Right cardiac atrium (tissue), 5 donors: ENCODE measurements at regions of chr1 and their contacts with region 1.

Region 1: DNA sequence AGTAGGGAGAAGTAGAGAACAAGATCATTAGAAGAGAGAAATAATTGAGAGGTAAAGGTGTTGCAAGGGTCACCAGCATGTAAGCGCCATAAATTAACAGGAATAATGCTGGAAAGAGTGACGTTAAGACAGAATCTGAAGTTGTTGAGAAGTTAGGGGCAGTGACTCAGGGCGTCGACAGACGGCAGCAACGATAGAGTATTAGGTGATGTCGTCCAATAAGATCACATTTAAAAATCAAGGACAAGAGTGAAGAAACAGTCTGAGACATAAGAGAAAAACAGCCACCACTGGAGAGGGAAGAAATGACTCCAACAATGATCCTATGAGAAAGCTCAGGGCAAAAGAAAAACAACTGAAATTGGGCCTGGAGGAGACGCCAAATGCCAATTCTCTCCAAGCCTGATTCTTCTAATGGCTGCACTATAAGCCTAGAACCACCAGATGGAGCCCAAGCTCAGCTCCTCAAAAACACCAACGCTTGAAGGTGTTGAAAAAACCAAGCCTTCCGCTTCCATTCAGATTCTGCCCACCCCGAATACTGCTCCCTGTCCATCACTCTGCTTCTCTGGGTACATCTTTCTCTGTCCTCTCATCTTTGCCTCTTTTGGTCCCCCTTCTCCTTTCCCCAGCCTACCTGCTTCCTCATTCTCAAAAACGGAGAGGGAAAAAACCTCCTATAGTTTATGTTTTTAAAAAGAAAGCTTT is 70.0 kb downstream of the LUZP1 start:
- DNase-seq: peak in 1 of 3 donors; percentile 36
- ATAC-seq: peak; percentile 38 to 50
- H3K4me3 ChIP-seq: no peak overlapping the region
- H3K27ac ChIP-seq: no peak overlapping the region
- H3K4me1 ChIP-seq: peaks cover 13% of the 10 kb centered on the region
- H3K27me3 ChIP-seq: no peaks in the 10 kb centered on the region

Region 2: GRCh38 chr1:23184212-23184934 is 85.8 kb after region 1 on chr1:
- intact Hi-C with region 1: loop called (anchors 2 kb)
- DNase-seq: no peak
- ATAC-seq: peak; percentile 23 to 32
- H3K4me3 ChIP-seq: peak overlapping the region; percentile 36
- H3K27ac ChIP-seq: no peak overlapping the region
- H3K4me1 ChIP-seq: no peaks in the 10 kb centered on the region
- H3K27me3 ChIP-seq: no peaks in the 10 kb centered on the region

Region 3: GRCh38 chr1:23263380-23263887 is 164.8 kb after region 1 on chr1:
- intact Hi-C with region 1: loop called in 1 of 4 experiments (anchors 10 kb)
- DNase-seq: no peak
- ATAC-seq: no peak
- H3K4me3 ChIP-seq: no peak overlapping the region
- H3K27ac ChIP-seq: no peak overlapping the region
- H3K4me1 ChIP-seq: no peaks in the 10 kb centered on the region
- H3K27me3 ChIP-seq: no peaks in the 10 kb centered on the region

Region 4: DNA sequence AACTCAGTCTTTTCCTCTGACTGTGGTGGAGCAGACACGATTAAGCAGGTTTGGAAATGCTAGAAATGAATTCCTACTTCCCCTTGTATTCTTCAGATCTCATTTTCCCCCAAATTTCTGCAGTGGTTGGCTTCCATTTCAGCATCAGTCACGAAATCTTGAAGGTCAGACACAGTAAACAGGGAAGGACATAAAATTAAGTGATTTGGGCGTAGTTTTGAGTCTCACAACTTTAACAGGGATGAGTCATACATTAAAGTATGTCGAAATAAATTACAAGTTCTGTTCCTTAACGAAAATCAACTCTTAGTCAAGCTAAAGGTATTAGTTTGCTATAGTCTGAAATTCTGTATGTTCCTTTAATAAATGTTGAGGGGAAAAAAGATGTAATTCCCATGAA is 184.3 kb after region 1 on chr1:
- intact Hi-C with region 1: loop called in 1 of 4 experiments (anchors 10 kb)
- DNase-seq: no peak
- ATAC-seq: no peak
- H3K4me3 ChIP-seq: no peak overlapping the region
- H3K27ac ChIP-seq: no peak overlapping the region
- H3K4me1 ChIP-seq: no peaks in the 10 kb centered on the region
- H3K27me3 ChIP-seq: no peaks in the 10 kb centered on the region

Region 5: DNA sequence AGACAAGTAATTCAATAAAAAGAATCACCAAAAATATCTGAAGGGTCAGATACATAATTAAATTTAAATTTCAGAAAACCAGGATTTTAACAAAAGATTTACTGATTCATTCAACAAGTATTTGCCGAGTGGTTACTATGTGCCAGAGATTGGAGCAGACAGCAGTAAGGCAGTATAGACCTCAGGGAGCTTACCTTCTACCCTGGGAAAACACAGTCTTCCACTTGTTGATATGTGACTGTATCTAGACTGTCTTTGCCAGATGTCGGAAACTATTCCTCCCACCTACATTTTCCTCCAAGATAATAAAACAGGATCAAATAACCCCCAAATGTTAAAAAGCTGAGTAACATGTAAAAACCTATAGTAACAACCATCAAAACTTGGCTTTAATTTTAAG is 239.3 kb after region 1 on chr1:
- intact Hi-C with region 1: no loop called
- DNase-seq: no peak
- ATAC-seq: no peak
- H3K4me3 ChIP-seq: no peak overlapping the region
- H3K27ac ChIP-seq: no peak overlapping the region
- H3K4me1 ChIP-seq: no peaks in the 10 kb centered on the region
- H3K27me3 ChIP-seq: no peaks in the 10 kb centered on the region